Dorsolateral prefrontal cortex (tissue), 120 donors: ENCODE measurements at regions of chr11 and their contacts with region 1.

Region 1: DNA sequence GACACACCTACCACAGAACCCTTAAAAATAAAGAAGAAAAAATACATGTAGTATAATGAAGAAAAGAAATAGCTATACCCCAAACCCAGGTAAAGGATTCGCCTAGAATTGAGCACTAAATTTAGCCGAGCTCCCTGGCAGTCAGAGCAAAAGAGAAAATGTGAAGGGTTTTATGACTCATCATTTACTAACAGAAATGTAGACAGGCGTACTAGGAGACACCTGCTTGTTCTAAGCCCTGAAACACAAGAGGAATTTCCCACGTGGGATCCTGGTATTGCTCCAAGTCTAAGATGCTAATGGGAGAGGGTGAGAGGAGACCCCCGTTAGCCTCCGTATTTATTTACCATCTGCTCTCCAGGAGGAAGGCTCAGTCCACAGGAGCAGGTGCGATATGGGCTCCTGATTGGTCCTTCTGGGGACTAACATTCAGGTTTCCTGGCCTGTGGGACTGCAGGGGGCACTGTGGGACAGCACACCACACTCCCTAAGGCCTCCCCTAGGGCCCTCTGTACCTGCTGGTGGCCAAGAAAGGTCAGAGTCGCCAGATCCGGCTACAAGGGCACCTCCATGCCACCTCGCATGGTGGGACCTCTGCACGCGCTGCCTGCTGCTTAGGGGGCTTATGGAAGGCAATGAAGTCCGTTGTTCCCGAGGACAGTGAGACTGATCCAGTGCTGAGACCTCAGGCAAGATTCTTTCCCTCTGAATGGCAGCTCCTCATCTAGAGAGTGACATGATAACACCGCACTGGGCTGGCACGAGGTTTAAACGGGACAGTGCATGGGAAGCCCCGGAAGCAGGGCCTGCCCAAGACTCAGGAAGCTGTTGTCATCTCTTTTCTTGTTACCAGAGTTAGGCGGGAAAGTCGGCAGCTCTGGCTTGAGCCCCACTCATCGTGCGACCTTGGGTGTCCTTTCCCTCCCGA is 25.8 kb downstream of the KCNC1 start:
- DNase-seq: peak in 3 of 10 donors; percentile 46 to 63 (median 60)
- H3K4me3 ChIP-seq: no peak overlapping the region
- H3K27ac ChIP-seq: peak overlapping the region in 12 of 59 donors; percentile 4 to 74 (median 30)
- H3K27me3 ChIP-seq: no peaks in the 10 kb centered on the region
- CTCF ChIP-seq: peak in 52 of 56 donors; percentile 20 to 72 (median 46)

Region 2: DNA sequence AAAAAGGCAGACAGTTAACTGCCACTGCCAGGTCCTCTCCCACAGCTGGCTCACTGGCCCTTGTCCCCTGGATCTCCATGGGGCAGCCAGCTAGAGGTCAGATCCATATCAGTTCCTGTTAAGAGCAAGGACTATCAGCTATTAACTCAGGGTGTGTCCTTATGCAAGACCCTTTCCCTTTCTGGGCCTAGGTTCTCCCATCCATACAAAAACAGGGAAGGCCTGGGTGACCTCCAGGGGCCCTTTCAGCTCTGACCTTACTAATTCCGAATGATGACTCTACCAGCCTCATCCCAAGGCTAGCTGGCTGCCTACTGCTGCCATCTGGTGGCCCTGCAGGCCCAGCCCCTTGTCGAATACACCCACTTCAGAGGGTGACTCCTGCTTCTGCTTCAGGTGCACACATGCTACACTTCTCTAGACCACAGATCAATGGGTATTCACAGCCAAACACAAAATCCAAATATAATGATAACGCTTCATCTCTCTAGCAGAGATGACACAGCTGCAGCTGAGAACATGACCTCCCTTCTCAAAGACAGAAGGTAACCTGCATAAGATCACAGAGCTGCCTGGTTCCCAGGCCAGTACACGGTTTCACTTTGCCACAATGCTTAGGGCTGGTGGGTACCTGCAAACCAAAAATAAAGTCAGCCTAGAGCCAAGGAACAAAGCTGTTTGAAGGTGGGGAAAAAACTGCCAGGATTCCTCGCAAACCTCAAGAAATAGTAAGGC is 218.4 kb after region 1 on chr11:
- intact Hi-C with region 1: loop called in 1 of 2 experiments (anchors 10 kb)
- DNase-seq: peak; percentile 53 to 88 (median 66)
- H3K4me3 ChIP-seq: no peak overlapping the region
- H3K27ac ChIP-seq: peak overlapping the region in 9 of 59 donors; percentile 15 to 61 (median 36)
- H3K27me3 ChIP-seq: no peaks in the 10 kb centered on the region
- CTCF ChIP-seq: peak; percentile 45 to 90 (median 78)